Activated CD4-positive, alpha-beta memory T cell treated with anti-CD3 and anti-CD28 coated beads for 36 hours (primary cell): ENCODE measurements at regions of chr6 and their contacts with region 1.

Region 1: GRCh38 chr6:15879382-15880261 is 216.8 kb upstream of the DTNBP1 start:
- DNase-seq: peak; percentile 85
- H3K4me3 Mint-ChIP-seq: peak overlapping the region; percentile 33
- H3K27ac Mint-ChIP-seq: peak overlapping the region; percentile 76
- H3K4me1 Mint-ChIP-seq: peaks cover 42% of the 10 kb centered on the region
- H3K27me3 Mint-ChIP-seq: peaks cover 4% of the 10 kb centered on the region

Region 2: DNA sequence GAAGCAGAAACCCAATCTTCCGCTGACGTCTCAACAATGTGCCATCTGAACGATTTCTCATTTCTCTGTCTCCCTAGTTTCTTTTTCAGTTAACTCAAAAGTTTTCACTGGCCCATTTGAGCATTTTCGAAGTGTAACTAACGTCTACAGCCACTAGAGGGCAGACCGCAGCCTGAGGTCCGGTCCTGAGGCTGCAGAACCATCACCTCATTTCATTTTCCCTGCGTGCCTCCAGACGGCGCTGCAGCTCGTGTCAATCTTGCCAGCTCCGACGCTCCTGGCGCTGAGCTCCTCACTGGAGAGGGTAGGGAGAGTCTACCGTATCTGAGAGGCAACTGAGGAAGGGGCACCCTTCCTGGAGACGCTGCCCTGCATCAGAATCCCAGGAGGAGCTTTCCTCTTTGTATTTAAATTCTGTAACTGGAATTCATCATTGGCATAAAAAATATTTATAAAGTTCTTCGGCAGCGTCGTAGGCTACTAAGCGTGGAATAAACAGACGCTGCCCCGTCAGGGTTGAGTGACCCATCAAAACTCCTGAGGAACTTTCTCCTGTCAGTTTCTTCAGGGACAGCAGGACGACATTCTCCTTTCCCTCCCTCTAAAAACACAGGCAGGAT is 188.3 kb before region 1 on chr6:
- CTCF ChIA-PET with region 1: interaction called, 9 read pairs
- POLR2A ChIA-PET with region 1: no interaction called
- intact Hi-C with region 1: loop called (anchors 1 kb)
- DNase-seq: peak; percentile 87
- H3K4me3 Mint-ChIP-seq: peak overlapping the region; percentile 43
- H3K27ac Mint-ChIP-seq: peak overlapping the region; percentile 43
- H3K4me1 Mint-ChIP-seq: peaks cover 8% of the 10 kb centered on the region
- H3K27me3 Mint-ChIP-seq: peaks cover 7% of the 10 kb centered on the region

Region 3: DNA sequence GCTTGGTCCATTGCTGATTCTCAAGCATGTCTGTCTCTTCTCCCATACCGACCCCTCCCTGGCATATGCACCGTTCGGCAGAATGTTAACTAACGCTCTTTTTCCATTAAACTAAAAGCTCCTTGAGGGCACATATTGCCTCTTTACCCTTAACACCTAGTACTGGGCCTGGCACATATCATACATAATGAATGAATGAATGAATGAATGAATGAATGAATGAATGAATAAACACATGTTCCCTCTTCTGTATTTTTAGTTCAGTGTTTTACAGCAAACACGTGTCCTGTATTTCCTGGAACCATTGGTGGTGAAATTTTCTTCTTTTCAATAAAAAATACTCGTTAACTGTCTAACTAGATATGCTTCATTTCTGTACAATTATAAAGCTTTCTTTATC is 42.4 kb before region 1 on chr6:
- CTCF ChIA-PET with region 1: no interaction called
- POLR2A ChIA-PET with region 1: no interaction called
- intact Hi-C with region 1: loop called (anchors 2 kb)
- DNase-seq: no peak
- H3K4me3 Mint-ChIP-seq: no peak overlapping the region
- H3K27ac Mint-ChIP-seq: no peak overlapping the region
- H3K4me1 Mint-ChIP-seq: peaks cover 6% of the 10 kb centered on the region
- H3K27me3 Mint-ChIP-seq: peaks cover 18% of the 10 kb centered on the region

Region 4: GRCh38 chr6:15861486-15861885 is 18.1 kb before region 1 on chr6:
- CTCF ChIA-PET with region 1: no interaction called
- POLR2A ChIA-PET with region 1: no interaction called
- intact Hi-C with region 1: no loop called
- DNase-seq: no peak
- H3K4me3 Mint-ChIP-seq: no peak overlapping the region
- H3K27ac Mint-ChIP-seq: no peak overlapping the region
- H3K4me1 Mint-ChIP-seq: no peaks in the 10 kb centered on the region
- H3K27me3 Mint-ChIP-seq: peaks cover 12% of the 10 kb centered on the region

Region 5: DNA sequence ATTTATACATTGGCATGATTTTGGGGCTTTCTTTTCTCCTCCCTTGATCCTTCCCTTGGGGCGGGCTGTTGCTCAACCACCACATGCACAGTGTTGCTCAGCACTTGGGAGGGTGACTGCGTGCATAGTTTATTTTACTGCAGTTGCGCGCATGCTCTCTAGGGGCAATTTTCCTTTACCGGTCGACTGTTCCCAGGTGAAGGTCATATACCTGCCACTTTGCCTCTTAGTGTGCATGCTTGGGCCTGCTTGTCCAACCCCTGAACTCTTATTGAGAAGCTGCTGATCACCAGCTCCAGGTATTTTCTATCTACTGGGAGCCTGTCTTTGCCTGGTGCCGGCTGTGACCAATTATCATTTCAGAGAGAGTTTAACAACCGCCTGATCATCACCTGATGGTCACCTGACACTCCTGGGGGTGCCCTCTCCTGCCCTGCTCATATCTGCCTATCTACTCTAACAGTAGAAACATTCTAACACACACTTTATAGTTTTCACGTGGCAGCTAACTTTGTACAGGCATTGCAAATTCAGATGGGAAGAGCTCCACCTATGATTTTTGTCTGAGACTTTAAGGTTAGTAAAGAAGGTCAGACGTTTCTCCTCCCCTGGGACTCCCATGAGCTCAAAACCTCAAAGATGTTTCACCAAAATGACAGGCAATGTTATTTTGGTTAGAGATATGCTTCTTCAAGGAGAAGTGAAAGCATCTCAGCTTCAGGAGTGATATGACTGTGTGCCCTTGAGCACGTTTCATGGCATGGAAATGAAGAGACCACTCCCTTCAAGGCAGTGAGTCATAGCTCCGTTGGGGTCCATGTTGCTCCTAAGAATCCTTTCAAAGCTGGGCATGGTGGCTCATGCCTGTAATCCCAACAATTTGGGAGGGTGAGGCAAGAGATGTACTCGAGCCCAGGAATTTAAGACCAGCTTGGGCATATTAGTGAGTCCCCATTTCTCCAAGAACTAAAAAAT is 21.8 kb after region 1 on chr6:
- CTCF ChIA-PET with region 1: interaction called, 9 read pairs
- POLR2A ChIA-PET with region 1: interaction called, 3 read pairs
- intact Hi-C with region 1: loop called (anchors 2 kb)
- DNase-seq: peak; percentile 57
- H3K4me3 Mint-ChIP-seq: no peak overlapping the region
- H3K27ac Mint-ChIP-seq: peak overlapping the region; percentile 60
- H3K4me1 Mint-ChIP-seq: peaks cover 25% of the 10 kb centered on the region
- H3K27me3 Mint-ChIP-seq: peaks cover 9% of the 10 kb centered on the region

Region 6: DNA sequence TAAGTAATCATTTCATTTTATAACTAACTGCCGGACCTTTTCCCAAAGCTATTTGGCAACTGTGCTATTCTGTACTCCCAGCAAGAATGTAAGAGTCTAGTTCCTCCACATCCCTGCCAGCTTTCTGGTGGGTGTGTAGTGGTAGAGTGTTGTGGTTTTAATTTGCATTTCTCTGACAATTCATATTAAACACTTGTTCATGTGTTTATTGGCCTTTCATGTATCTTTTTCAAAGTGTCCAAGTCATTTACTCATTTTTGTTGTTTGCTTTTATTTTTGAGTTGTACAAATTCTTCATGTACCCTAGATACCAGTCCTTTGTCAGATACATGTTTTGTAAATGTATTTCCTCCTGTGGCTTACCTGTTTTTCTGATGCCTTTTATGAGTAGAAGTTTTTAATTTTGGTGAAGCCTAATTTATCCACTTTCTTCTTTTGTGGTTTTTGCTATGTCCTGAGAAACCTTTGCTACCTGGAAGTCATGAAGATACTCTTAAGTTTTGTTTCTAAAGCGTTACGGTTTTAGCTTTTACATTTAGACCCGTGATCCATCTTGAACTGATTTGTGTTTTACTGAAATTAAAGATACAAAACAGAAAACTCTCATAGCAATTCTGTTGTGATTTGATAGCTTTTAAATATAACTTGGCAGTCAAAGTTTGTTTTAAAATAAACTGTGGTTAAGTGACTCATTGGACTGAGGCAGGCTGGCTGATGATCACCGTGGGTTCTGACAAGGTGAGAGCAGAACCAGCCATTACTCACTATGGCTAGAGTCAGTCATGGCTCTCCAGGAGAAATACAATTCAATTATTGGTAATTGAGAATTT is 257.2 kb after region 1 on chr6:
- CTCF ChIA-PET with region 1: no interaction called
- POLR2A ChIA-PET with region 1: interaction called, 5 read pairs
- intact Hi-C with region 1: loop called (anchors 5 kb)
- DNase-seq: peak; percentile 75
- H3K4me3 Mint-ChIP-seq: peak overlapping the region; percentile 46
- H3K27ac Mint-ChIP-seq: peak overlapping the region; percentile 86
- H3K4me1 Mint-ChIP-seq: peaks cover 76% of the 10 kb centered on the region
- H3K27me3 Mint-ChIP-seq: no peaks in the 10 kb centered on the region